Caco-2 (cell line): ENCODE measurements at regions of chr7 and their contacts with region 1.

Region 1: GRCh38 chr7:16543456-16543855 is 16.8 kb downstream of the LRRC72 start:
- DNase-seq: no peak
- H3K4me3 ChIP-seq: no peak overlapping the region
- H3K4me3 Mint-ChIP-seq: no peak overlapping the region
- H3K27ac Mint-ChIP-seq: peak overlapping the region; percentile 85
- H3K4me1 ChIP-seq: peaks cover 38% of the 10 kb centered on the region
- H3K4me1 Mint-ChIP-seq: peaks cover 31% of the 10 kb centered on the region
- H3K27me3 ChIP-seq: no peaks in the 10 kb centered on the region
- H3K27me3 Mint-ChIP-seq: no peaks in the 10 kb centered on the region
- CTCF ChIP-seq: no peak

Region 2: DNA sequence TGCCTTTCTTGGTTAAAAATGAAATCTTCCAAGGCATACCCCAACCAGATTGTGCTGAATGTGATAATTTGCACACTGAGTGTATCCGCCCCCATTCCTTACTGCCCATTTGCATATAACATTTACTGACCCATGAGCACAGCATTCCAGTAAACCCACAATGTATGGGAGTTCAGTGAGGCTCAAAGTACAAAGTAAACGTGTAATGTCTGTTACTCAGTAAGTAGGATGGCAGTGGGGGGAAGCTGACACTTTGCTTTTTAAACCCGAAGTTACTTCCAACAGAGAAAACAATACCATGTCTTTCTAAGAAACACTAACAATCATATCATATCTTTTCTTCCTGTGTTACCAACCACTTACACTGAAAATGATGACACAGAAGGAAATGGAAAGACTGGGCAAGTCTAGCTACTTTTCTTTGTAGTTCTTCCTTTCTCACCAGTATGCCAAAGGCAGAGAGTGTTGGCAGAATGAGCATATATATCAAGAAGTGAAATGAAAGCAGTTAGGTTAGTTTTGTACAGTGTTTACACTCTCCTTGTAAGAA is 50.9 kb before region 1 on chr7:
- CTCF ChIA-PET with region 1: no interaction called
- POLR2A ChIA-PET with region 1: no interaction called
- intact Hi-C with region 1: loop called (anchors 2 kb)
- DNase-seq: peak; percentile 49 to 61
- H3K4me3 ChIP-seq: no peak overlapping the region
- H3K4me3 Mint-ChIP-seq: peak overlapping the region; percentile 37
- H3K27ac Mint-ChIP-seq: peak overlapping the region; percentile 69
- H3K4me1 ChIP-seq: peaks cover 40% of the 10 kb centered on the region
- H3K4me1 Mint-ChIP-seq: peaks cover 31% of the 10 kb centered on the region
- H3K27me3 ChIP-seq: no peaks in the 10 kb centered on the region
- H3K27me3 Mint-ChIP-seq: no peaks in the 10 kb centered on the region
- CTCF ChIP-seq: no peak

Region 3: DNA sequence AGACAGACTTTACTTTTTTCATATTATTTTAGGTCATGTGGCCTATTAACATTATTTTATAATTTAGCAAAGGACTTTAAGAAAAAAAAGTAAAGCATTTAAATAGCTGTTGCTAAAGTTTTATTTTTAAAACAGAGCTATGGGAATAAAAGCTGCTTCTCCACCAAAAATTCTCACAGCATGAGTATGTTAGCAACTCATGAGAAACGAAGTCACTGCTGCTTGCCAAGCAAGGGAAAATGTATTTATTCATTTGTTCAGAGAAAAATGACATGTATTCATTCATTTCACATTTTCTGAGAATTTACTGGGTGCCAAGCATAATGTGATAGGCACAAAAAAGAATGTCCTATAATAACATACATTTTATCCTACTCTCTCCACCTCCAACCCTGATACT is 11.7 kb before region 1 on chr7:
- CTCF ChIA-PET with region 1: interaction called, 6 read pairs
- POLR2A ChIA-PET with region 1: no interaction called
- intact Hi-C with region 1: loop called (anchors 1 kb)
- DNase-seq: no peak
- H3K4me3 ChIP-seq: no peak overlapping the region
- H3K4me3 Mint-ChIP-seq: no peak overlapping the region
- H3K27ac Mint-ChIP-seq: peak overlapping the region; percentile 29
- H3K4me1 ChIP-seq: peaks cover 16% of the 10 kb centered on the region
- H3K4me1 Mint-ChIP-seq: peaks cover 25% of the 10 kb centered on the region
- H3K27me3 ChIP-seq: no peaks in the 10 kb centered on the region
- H3K27me3 Mint-ChIP-seq: no peaks in the 10 kb centered on the region
- CTCF ChIP-seq: no peak

Region 4: DNA sequence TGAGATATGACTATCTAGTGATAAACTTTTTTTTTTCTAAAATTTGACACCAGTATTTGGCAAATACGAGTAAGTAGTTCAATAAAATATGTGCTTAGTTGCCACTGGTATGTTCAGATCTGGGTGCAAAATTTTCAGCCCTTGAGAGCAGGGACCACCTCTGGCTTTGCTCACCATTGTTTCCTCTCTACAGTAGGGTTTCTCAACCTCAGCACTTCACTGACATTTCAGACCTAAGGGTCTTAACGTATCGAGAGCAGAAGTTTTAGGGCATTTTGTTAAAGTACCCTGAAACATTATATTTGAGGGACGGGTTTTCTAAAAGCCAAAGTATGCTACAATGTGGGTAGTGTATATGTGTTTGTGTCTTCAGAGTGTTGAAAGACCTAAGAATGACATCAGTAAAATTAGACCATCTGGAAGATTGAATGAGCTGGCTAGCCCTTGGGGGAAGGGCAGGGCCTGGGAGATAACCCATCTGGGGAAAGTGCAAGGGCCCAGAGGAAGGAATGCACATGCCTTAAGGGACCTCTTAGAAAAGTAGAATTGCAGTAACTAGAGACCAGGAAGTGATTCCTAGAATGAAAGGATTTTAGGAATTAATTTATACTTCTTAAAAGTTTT is 114.3 kb after region 1 on chr7:
- CTCF ChIA-PET with region 1: no interaction called
- POLR2A ChIA-PET with region 1: no interaction called
- intact Hi-C with region 1: no loop called
- DNase-seq: peak; percentile 79 to 89
- H3K4me3 ChIP-seq: no peak overlapping the region
- H3K4me3 Mint-ChIP-seq: peak overlapping the region; percentile 3
- H3K27ac Mint-ChIP-seq: peak overlapping the region; percentile 58
- H3K4me1 ChIP-seq: peaks cover 69% of the 10 kb centered on the region
- H3K4me1 Mint-ChIP-seq: peaks cover 36% of the 10 kb centered on the region
- H3K27me3 ChIP-seq: no peaks in the 10 kb centered on the region
- H3K27me3 Mint-ChIP-seq: no peaks in the 10 kb centered on the region
- CTCF ChIP-seq: peak in 1 of 2 experiments; percentile 9